Caco-2 (cell line): ENCODE measurements at regions of chr9 and their contacts with region 1.

Region 1: GRCh38 chr9:122264360-122265148 is at the starts of genes MRRF and RBM18:
- DNase-seq: peak; percentile 92 to 94
- H3K4me3 ChIP-seq: peak within 1 kb of the TSS; percentile 65
- H3K4me3 Mint-ChIP-seq: peak within 1 kb of the TSS; percentile 87
- H3K27ac Mint-ChIP-seq: peak within 1 kb of the TSS; percentile 99
- H3K4me1 ChIP-seq: 0 out of 2 replicates have a peak, but pooled peaks cover 3% of the 10 kb centered on the region
- H3K4me1 Mint-ChIP-seq: peaks cover 28% of the 10 kb centered on the region
- H3K27me3 ChIP-seq: no peaks in the 10 kb centered on the region
- H3K27me3 Mint-ChIP-seq: no peaks in the 10 kb centered on the region
- CTCF ChIP-seq: no peak
- total RNA-seq, gene MRRF: 61.7 and 64.6 TPM in 2 replicates
- total RNA-seq, gene RBM18: 20.6 and 23.1 TPM in 2 replicates

Region 2: GRCh38 chr9:121975801-121976277 is 288.7 kb before region 1 on chr9:
- CTCF ChIA-PET with region 1: no interaction called
- POLR2A ChIA-PET with region 1: interaction called, 11 read pairs
- intact Hi-C with region 1: no loop called
- DNase-seq: peak; percentile 78 to 81
- H3K4me3 ChIP-seq: no peak overlapping the region
- H3K4me3 Mint-ChIP-seq: peak overlapping the region; percentile 58
- H3K27ac Mint-ChIP-seq: peak overlapping the region; percentile 94
- H3K4me1 ChIP-seq: peaks cover 18% of the 10 kb centered on the region
- H3K4me1 Mint-ChIP-seq: peaks cover 17% of the 10 kb centered on the region
- H3K27me3 ChIP-seq: no peaks in the 10 kb centered on the region
- H3K27me3 Mint-ChIP-seq: no peaks in the 10 kb centered on the region
- CTCF ChIP-seq: no peak

Region 3: DNA sequence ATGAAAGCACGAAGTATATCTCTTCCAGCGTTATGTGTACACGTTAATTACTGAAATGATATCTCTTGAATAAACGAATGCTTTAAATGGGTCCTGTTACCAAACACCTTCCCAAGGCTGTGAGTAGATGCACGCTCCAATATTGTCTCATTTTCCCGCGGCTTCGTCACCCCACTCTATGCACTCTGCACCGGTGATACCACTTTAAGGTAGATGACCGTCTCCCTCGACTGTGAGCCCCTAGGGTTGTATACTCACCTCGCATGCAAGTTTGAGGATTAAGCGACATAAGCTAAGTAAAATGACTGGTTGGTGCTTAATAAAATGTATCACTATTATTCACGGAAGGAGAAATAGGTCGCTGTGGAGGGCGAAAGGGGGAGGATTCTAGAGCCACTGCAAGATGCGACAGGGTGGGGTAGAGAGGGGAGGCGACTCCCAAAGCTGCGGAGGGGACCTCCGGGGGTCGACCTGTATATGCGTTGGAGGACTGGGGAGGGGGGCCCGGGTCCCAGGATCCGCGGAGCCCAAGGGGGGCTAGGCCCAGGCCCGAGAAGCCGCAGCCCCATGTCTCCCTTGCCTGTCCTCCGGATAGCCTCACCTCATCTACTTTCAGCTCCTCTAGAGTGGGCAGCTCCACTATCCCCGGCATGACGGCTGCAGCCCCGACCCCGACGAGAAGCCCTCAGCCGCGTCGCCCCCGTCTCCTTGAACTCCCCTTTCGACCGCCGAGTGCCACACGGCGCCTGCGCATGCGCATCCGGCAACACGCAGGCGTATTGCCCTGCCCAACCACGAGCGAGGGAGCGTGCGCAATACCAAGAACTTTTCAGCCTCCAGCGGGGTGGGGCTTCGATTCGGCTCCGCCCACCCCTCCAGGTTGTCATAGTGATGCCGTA is 105.3 kb before region 1 on chr9 and contains the starts of genes MORN5 and NDUFA8:
- CTCF ChIA-PET with region 1: no interaction called
- POLR2A ChIA-PET with region 1: interaction called, 4 read pairs
- intact Hi-C with region 1: loop called (anchors 1 kb)
- DNase-seq: peak; percentile 97 to 98
- H3K4me3 ChIP-seq: peak within 1 kb of the TSS; percentile 83
- H3K4me3 Mint-ChIP-seq: peak within 1 kb of the TSS; percentile 98
- H3K27ac Mint-ChIP-seq: peak within 1 kb of the TSS; percentile 99
- H3K4me1 ChIP-seq: 0 out of 2 replicates have a peak, but pooled peaks cover 3% of the 10 kb centered on the region
- H3K4me1 Mint-ChIP-seq: peaks cover 6% of the 10 kb centered on the region
- H3K27me3 ChIP-seq: no peaks in the 10 kb centered on the region
- H3K27me3 Mint-ChIP-seq: no peaks in the 10 kb centered on the region
- CTCF ChIP-seq: no peak
- total RNA-seq, gene MORN5: not detected in 2 replicates
- total RNA-seq, gene NDUFA8: 58.0 and 63.5 TPM in 2 replicates